Right cardiac atrium (tissue), 5 donors: ENCODE measurements at regions of chr10 and their contacts with region 1.

Region 1: GRCh38 chr10:31864834-31865518 is 63.7 kb downstream of the ARHGAP12 start:
- DNase-seq: no peak
- ATAC-seq: peak in 1 of 2 donors; percentile 64
- H3K4me3 ChIP-seq: no peak overlapping the region
- H3K27ac ChIP-seq: no peak overlapping the region
- H3K4me1 ChIP-seq: peaks cover 5% of the 10 kb centered on the region
- H3K27me3 ChIP-seq: no peaks in the 10 kb centered on the region

Region 2: GRCh38 chr10:31146491-31147209 is 718.3 kb before region 1 on chr10:
- intact Hi-C with region 1: no loop called
- DNase-seq: peak; percentile 44 to 80 (median 77)
- ATAC-seq: peak; percentile 66 to 71
- H3K4me3 ChIP-seq: no peak overlapping the region
- H3K27ac ChIP-seq: no peak overlapping the region
- H3K4me1 ChIP-seq: peaks cover 3% of the 10 kb centered on the region
- H3K27me3 ChIP-seq: no peaks in the 10 kb centered on the region

Region 3: DNA sequence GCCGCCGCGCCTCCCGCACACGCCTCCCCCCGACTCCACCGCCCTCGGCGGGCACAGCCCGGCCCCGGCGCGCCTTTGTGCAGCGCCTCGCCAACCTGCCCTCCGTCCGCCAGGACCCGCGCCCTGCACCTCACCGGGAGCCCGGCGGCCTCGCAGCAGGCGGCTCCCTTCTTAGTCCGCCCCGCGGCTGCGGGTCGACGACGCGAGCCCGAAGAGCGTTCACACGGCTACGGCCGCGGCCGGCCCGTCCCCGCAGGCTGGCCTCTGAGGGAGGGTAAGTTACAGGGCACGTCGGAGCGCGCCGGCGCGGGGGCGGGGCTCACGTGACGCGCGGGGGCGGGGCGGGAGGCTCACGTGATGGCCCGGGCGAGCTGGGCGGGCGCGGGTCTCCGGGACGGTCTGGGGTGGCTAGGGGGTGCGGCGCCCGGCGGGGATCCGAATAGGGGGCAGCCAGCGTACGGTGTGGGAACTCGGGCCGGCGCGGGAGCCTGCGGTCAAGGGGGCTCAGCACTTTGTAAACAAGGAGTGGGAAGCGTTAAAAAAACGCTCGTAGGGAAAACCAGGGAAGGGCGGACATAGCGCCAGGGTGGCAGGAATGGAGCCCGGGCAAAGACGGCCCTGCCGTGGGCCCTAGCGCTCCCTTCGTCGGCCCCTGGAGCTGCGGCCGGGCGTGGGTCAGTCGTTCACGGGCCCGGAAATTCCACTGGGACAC is 63.7 kb after region 1 on chr10 and contains the start of gene ARHGAP12:
- intact Hi-C with region 1: loop called in 3 of 4 experiments (anchors 10 kb)
- DNase-seq: peak; percentile 91 to 98 (median 97)
- ATAC-seq: peak; percentile 98
- H3K4me3 ChIP-seq: peak within 1 kb of the TSS; percentile 89
- H3K27ac ChIP-seq: peak within 1 kb of the TSS; percentile 97
- H3K4me1 ChIP-seq: peaks cover 3% of the 10 kb centered on the region
- H3K27me3 ChIP-seq: no peaks in the 10 kb centered on the region
- total RNA-seq, gene ARHGAP12: 21.5 to 25.5 (median 25.0) TPM

Region 4: DNA sequence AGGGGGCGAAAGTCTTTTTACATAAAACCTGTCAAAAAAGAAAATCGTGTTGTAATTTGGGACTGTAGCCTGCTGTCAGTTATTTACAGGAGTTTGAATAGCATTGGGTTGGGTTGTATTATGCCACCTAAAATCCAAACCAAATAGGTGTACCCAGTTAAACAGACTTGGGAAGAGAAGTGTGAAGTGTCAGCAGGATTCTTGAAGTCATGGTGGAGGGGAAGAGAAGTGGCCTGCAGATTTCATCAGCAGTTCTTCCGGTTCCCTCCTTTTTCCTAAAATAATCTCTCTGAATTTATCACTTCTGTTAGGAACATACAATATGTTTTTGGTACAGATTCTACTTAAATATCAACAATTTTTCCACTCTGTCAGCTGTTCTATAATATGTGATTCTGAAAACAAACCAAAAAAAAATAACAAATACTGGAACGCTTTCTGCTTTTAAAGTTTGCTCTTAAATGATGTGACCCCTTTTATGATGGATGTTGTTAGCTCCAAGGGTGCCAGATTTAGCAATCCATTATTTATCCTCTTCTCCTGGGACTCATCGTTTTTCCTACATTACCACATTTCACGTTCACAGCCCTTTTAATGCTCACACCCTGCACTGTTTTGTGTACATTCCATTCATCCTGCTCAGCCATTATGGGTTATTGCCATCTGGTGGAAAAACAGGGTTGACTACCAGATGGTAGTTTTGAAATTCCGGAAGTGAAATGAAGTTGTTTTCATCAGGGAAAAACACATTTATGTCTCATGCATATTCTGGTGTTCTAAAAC is 82.4 kb after region 1 on chr10:
- intact Hi-C with region 1: loop called in 2 of 4 experiments (anchors 5 to 10 kb)
- DNase-seq: no peak
- ATAC-seq: peak; percentile 86 to 87
- H3K4me3 ChIP-seq: no peak overlapping the region
- H3K27ac ChIP-seq: no peak overlapping the region
- H3K4me1 ChIP-seq: no peaks in the 10 kb centered on the region
- H3K27me3 ChIP-seq: no peaks in the 10 kb centered on the region

Region 5: DNA sequence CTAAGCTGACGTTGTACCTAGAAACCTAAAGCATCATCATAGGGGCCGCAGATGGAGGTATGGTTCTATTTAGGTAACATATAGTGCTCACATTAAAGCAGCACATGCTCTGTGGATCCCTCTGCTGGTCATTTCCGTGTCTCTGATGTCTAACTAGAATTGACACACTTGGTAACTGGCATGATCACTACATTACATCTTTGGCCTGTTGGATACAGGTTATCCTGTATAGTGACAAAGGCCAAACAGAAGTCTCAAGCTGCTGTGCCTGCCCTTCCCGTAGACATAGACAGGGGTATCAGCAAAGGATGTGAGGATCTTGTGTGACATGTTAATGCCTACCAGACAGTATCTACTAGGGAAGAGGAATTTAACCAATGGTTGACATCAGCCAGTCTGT is 140.1 kb after region 1 on chr10:
- intact Hi-C with region 1: loop called in 2 of 4 experiments (anchors 5 kb)
- DNase-seq: peak in 1 of 3 donors; percentile 47
- ATAC-seq: peak; percentile 42 to 61
- H3K4me3 ChIP-seq: no peak overlapping the region
- H3K27ac ChIP-seq: no peak overlapping the region
- H3K4me1 ChIP-seq: peaks cover 5% of the 10 kb centered on the region
- H3K27me3 ChIP-seq: no peaks in the 10 kb centered on the region